Aorta (tissue), 5 donors: ENCODE measurements at regions of chr11 and their contacts with region 1.

Region 1: DNA sequence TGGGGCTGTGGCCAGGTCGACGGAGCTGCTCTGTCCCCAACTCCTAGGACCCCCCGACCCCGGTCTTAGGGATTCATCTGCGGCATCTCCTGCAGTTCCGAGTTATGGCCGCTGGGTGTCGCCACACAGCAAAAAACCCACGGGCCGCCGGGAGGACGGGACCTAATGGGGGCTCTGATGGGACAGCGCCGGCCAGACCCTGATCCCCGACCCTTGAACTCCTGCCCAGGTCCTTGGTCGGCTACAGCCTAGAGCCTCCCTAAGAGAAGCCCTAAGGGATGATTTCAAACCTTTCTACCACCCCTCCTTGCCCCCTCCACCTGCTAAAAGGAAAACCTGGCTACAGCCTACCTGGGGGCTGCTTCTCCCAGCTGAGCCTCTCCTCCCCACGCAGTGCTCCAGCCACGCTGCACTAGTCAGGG is 30.8 kb upstream of the LRRC10B start:
- DNase-seq: peak; percentile 59 to 89
- ATAC-seq: peak; percentile 55
- H3K4me3 ChIP-seq: no peak overlapping the region
- H3K27ac ChIP-seq: no peak overlapping the region
- H3K4me1 ChIP-seq: no peaks in the 10 kb centered on the region
- H3K27me3 ChIP-seq: no peaks in the 10 kb centered on the region

Region 2: DNA sequence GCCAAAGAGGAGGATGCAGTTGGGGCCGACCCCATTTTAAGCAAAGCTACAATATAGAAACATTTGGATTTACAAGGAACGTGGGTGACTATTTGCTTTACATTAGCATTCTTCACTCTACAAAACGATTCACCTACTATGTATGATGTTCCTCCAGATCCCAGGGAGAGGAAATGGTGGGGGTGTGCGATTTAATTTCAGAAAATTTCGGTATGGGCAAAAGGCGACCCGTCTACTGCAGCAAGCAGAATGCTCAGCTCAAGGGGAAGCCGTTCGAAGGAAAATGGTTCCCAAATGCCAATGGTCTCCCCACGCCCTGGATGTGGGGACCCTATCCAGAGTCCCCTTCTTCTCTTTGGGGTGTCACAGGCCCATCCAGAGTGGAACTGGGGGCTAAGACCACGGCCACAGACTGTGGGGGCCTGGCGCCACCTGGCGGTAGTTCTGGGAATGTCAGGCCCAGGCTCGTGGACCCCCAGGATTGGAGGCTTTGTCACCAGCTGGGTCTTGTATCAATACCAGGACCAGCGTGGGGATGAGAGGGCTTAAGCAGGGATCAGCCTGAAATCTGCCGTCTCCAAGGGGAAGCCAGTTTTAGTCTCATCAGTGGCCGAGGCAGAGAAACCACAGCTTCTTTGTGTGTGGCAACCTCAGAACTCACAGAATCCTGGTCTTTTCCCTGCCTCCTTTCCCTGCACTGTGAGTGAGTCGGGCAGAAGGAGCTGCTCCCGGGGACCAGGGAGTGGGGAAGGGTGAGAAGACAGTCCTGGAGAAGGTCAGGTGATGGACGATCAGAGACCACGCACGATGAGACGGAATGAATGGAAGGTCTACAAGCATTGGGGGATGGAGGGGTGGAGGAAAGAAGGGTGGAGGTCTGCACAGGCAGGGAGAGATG is 39.2 kb after region 1 on chr11:
- intact Hi-C with region 1: loop called (anchors 1 to 2 kb)
- DNase-seq: peak in 1 of 2 donors; percentile 84
- ATAC-seq: peak; percentile 68
- H3K4me3 ChIP-seq: no peak overlapping the region
- H3K27ac ChIP-seq: no peak overlapping the region
- H3K4me1 ChIP-seq: no peaks in the 10 kb centered on the region
- H3K27me3 ChIP-seq: no peaks in the 10 kb centered on the region

Region 3: GRCh38 chr11:61639816-61640443 is 162.2 kb after region 1 on chr11:
- intact Hi-C with region 1: loop called in 1 of 2 experiments (anchors 10 kb)
- DNase-seq: no peak
- ATAC-seq: no peak
- H3K4me3 ChIP-seq: no peak overlapping the region
- H3K27ac ChIP-seq: no peak overlapping the region
- H3K4me1 ChIP-seq: no peaks in the 10 kb centered on the region
- H3K27me3 ChIP-seq: no peaks in the 10 kb centered on the region